ENCODE measurements at regions of chr20 and their contacts with region 1.

Region 1: DNA sequence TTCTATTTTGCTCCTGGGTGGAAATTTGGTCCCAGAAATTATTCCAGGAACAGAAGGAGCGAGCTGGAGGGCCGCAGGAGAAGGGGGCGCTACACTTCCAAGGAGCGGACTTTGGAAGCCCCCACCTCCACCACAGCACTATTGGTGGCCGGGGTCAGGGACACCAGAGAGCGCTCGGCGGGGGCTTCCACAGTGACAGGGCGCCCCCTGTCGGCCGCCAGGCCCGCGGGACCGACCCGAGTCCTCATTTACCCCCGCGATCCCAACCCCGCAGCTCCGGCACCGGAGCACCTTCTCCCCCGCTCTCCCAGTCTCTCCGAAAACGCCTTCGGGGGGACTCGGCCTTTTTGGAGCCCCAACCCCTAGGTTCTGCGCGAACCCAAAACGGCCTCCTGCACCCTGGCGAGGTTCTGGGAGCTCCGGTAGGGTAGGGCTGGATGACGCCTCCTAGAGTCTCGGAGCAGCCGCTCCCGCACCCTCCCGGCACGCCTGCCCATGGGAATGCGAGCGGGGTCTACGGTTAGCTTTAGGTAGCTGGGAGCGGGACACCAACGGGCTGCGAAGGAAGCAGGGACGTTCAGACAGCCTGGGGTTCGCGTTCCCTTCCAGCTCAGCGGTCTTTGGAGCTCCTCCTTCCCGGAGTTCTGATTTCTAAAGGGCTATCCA is 2.4 kb upstream of the FOXA2 start:
- DNase-seq: peak in 1 of 2 experiments; percentile 90
- H3K4me3 ChIP-seq: peak overlapping the region in 3 of 4 experiments; percentile 2 to 52 (median 19); a peak in 3 of 8 replicates
- H3K27ac ChIP-seq: no peak overlapping the region
- H3K4me1 ChIP-seq: peaks cover 9 to 21% (median 14%) of the 10 kb centered on the region in 4 experiments
- H3K27me3 ChIP-seq: peaks cover 71 to 89% (median 86%) of the 10 kb centered on the region in 4 experiments
- CTCF ChIP-seq: peak; percentile 76 to 83 (median 83)
- EP300 ChIP-seq: no peak
- POLR2A ChIP-seq: no peak
- RAD21 ChIP-seq: peak; percentile 71 to 78

Region 2: GRCh38 chr20:22339091-22339881 is 247.5 kb before region 1 on chr20:
- CTCF ChIA-PET with region 1: interaction called, 82 read pairs
- POLR2A ChIA-PET with region 1: no interaction called
- DNase-seq: peak; percentile 17 to 57
- H3K4me3 ChIP-seq: no peak overlapping the region
- H3K27ac ChIP-seq: no peak overlapping the region
- H3K4me1 ChIP-seq: no peaks in the 10 kb centered on the region
- H3K27me3 ChIP-seq: peaks cover 0 to 7% (median 0%) of the 10 kb centered on the region in 4 experiments; a peak in 2 of 7 replicates
- CTCF ChIP-seq: peak in 2 of 3 experiments; percentile 75 to 80; a peak in 3 of 4 replicates
- EP300 ChIP-seq: no peak
- POLR2A ChIP-seq: no peak
- RAD21 ChIP-seq: peak; percentile 96

Region 3: GRCh38 chr20:22480336-22480735 is 106.4 kb before region 1 on chr20:
- CTCF ChIA-PET with region 1: interaction called, 10 read pairs
- POLR2A ChIA-PET with region 1: no interaction called
- DNase-seq: no peak
- H3K4me3 ChIP-seq: no peak overlapping the region
- H3K27ac ChIP-seq: no peak overlapping the region
- H3K4me1 ChIP-seq: no peaks in the 10 kb centered on the region; a peak in 2 of 7 replicates
- H3K27me3 ChIP-seq: no peaks in the 10 kb centered on the region
- CTCF ChIP-seq: no peak
- EP300 ChIP-seq: no peak
- POLR2A ChIP-seq: no peak
- RAD21 ChIP-seq: no peak

Region 4: DNA sequence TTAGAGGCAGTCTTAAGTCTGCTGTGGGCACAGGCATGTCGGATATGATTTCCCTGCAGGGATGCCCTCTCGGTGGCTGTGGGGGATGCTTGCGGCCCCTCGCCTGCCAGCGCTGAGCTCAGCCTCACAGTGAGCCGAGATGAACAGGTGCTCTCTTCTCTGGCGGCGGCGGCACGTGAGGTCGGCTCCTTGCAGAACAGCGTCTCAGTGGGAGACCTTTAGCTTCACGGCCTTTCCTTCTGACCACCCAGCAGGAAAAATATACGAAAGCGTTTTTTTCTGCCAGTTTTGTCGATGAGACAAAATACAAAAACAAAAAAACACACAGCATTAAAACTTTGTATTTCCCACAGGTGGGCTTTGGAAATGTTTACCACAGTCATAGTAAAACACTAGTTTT is 26.0 kb before region 1 on chr20:
- CTCF ChIA-PET with region 1: interaction called, 12 read pairs
- POLR2A ChIA-PET with region 1: no interaction called
- DNase-seq: peak in 1 of 2 experiments; percentile 58
- H3K4me3 ChIP-seq: no peak overlapping the region; a peak in 1 of 8 replicates
- H3K27ac ChIP-seq: no peak overlapping the region
- H3K4me1 ChIP-seq: peaks cover 10 to 35% (median 24%) of the 10 kb centered on the region in 4 experiments
- H3K27me3 ChIP-seq: peaks cover 70 to 99% (median 97%) of the 10 kb centered on the region in 4 experiments
- CTCF ChIP-seq: no peak
- EP300 ChIP-seq: no peak
- POLR2A ChIP-seq: no peak
- RAD21 ChIP-seq: no peak

Region 5: DNA sequence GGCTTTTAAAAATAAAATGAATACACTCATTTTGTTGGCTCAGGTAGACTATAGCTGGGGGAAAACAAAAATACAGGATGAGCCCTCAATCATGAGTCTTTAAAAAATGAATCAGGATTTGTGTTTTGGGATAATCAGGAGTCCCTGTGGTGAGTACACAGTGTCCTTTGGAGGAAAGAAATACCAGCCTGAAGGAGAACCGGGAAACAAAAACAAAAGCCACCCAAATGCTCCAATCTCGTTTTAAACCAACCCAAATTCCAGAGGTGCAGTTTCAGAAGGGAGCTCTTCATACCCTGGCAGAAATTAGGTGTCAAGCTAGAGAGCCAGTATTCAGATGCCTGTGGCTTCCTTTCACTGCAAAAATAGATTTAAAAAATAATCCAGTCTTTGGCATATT is 20.9 kb after region 1 on chr20:
- CTCF ChIA-PET with region 1: interaction called, 27 read pairs
- POLR2A ChIA-PET with region 1: no interaction called
- DNase-seq: no peak
- H3K4me3 ChIP-seq: no peak overlapping the region
- H3K27ac ChIP-seq: no peak overlapping the region
- H3K4me1 ChIP-seq: peaks cover 0 to 4% (median 1%) of the 10 kb centered on the region in 4 experiments; a peak in 3 of 7 replicates
- H3K27me3 ChIP-seq: 0 out of 7 replicates have a peak, but pooled peaks cover 0 to 1% (median 0%) of the 10 kb centered on the region in 4 experiments
- CTCF ChIP-seq: no peak
- EP300 ChIP-seq: no peak
- POLR2A ChIP-seq: no peak
- RAD21 ChIP-seq: no peak

Region 6: GRCh38 chr20:22684072-22684762 is 97.4 kb after region 1 on chr20:
- CTCF ChIA-PET with region 1: interaction called, 29 read pairs
- POLR2A ChIA-PET with region 1: no interaction called
- DNase-seq: peak; percentile 47 to 83
- H3K4me3 ChIP-seq: no peak overlapping the region
- H3K27ac ChIP-seq: no peak overlapping the region
- H3K4me1 ChIP-seq: no peaks in the 10 kb centered on the region
- H3K27me3 ChIP-seq: no peaks in the 10 kb centered on the region; a peak in 3 of 7 replicates
- CTCF ChIP-seq: peak; percentile 69 to 93 (median 91)
- EP300 ChIP-seq: no peak
- POLR2A ChIP-seq: no peak
- RAD21 ChIP-seq: peak; percentile 99

Measured in H1 (cell line).